ENCODE measurements at regions of chr2 and their contacts with region 1.

Region 1: GRCh38 chr2:20970068-20970467 is 73.8 kb downstream of the APOB start:
- DNase-seq: no peak
- ATAC-seq: no peak
- H3K4me3 ChIP-seq: no peak overlapping the region
- H3K27ac ChIP-seq: no peak overlapping the region
- H3K4me1 ChIP-seq: peaks cover 0 to 13% of the 10 kb centered on the region in 2 donors
- H3K27me3 ChIP-seq: no peaks in the 10 kb centered on the region

Region 2: GRCh38 chr2:20313659-20314058 is 656.4 kb before region 1 on chr2:
- intact Hi-C with region 1: no loop called
- DNase-seq: no peak
- ATAC-seq: no peak
- H3K4me3 ChIP-seq: no peak overlapping the region
- H3K27ac ChIP-seq: no peak overlapping the region
- H3K4me1 ChIP-seq: peaks cover 0 to 2% of the 10 kb centered on the region in 2 donors
- H3K27me3 ChIP-seq: no peaks in the 10 kb centered on the region

Region 3: DNA sequence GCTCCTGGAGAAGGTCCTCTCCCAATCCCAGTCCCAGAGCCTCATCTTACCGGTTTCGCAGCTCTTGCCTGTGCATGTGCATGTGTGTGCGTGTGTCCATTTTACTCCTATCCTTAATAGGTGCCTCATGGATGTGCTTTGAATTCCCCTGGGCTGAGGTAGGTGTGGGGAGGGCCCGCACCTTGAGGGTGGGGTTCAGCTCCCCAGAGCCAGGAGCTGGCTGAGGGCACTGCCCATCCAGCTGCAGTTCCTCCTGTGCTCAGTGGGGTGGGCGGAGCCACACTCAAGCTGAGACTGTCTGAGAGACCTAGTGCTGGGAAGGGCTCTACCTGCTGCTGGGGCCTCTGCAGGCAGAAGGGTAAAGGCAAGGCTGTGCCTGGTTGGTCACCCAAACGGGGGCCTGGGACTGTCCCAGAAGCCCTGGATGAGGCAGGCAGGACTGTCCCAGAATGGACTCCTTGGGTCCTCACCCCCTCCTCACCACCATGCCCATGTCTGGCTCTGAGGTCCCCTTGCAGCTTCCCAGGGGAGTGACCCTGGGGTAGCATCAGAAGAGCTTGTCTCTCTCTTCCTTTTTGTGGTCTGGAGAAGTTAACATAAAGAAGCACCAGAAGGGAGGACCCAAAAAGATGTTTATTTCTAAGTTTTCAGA is 294.2 kb before region 1 on chr2:
- intact Hi-C with region 1: loop called in 1 of 2 experiments (anchors 5 kb)
- DNase-seq: no peak
- ATAC-seq: peak; percentile 48
- H3K4me3 ChIP-seq: no peak overlapping the region
- H3K27ac ChIP-seq: peak overlapping the region; percentile 23 to 80
- H3K4me1 ChIP-seq: no peaks in the 10 kb centered on the region
- H3K27me3 ChIP-seq: no peaks in the 10 kb centered on the region

Region 4: GRCh38 chr2:20728114-20728758 is 241.8 kb before region 1 on chr2:
- intact Hi-C with region 1: loop called in 1 of 2 experiments (anchors 5 kb)
- DNase-seq: no peak
- ATAC-seq: peak; percentile 41
- H3K4me3 ChIP-seq: no peak overlapping the region
- H3K27ac ChIP-seq: peak overlapping the region; percentile 29 to 93
- H3K4me1 ChIP-seq: peaks cover 8 to 13% of the 10 kb centered on the region in 2 donors
- H3K27me3 ChIP-seq: no peaks in the 10 kb centered on the region